Endothelial cell of umbilical vein (primary cell): ENCODE measurements at regions of chr10 and their contacts with region 1.

Region 1: DNA sequence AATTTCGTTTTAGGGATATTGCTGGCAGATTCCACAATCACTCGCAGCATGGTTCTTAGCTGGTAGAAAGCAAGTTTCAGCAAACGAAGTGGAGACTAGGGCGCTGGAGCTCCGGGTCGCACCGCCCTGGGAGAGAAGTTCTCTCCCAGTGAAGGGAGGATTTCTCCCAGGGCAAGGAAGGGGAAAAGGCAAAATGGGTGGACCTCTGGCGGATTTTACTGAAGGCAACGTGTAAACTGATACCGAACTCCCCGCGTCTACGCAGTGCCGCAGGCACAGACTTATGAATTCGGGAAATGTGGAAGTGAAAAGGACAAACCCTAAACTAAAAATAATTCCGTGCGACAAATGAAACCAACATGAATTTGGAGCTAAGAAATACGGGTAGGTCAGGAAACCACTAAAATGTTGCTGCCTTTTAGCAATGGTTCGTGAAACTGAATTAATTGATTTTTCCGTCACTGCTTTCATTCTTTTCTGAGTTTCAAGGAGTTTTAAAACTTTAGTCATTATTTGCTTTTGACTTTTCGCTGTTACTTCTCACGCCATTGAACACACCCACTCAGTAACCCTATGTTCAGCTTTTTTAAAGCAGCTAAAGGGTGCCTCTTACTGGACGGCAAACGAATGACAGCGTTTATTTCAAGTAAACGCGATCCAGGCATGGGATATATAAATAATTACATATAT is at the start of gene MYOF:
- DNase-seq: peak; percentile 89
- H3K4me3 ChIP-seq: peak within 1 kb of the TSS; percentile 57 to 99 (median 72)
- H3K27ac ChIP-seq: peak within 1 kb of the TSS; percentile 89
- H3K4me1 ChIP-seq: peaks cover 22% of the 10 kb centered on the region
- H3K27me3 ChIP-seq: no peaks in the 10 kb centered on the region
- CTCF ChIP-seq: peak; percentile 46 to 47
- POLR2A ChIP-seq: peak; percentile 76
- total RNA-seq, gene MYOF: 342 and 379 TPM in 2 replicates

Region 2: GRCh38 chr10:93376372-93377293 is 105.7 kb before region 1 on chr10:
- CTCF ChIA-PET with region 1: interaction called, 451 read pairs
- POLR2A ChIA-PET with region 1: interaction called, 12 read pairs
- dilution Hi-C with region 1: no loop called
- intact Hi-C with region 1: loop called (anchors 1 kb)
- DNase-seq: peak; percentile 90
- H3K4me3 ChIP-seq: no peak overlapping the region
- H3K27ac ChIP-seq: peak overlapping the region; percentile 57
- H3K4me1 ChIP-seq: peaks cover 46% of the 10 kb centered on the region
- H3K27me3 ChIP-seq: no peaks in the 10 kb centered on the region
- CTCF ChIP-seq: peak; percentile 77 to 78
- POLR2A ChIP-seq: no peak

Region 3: DNA sequence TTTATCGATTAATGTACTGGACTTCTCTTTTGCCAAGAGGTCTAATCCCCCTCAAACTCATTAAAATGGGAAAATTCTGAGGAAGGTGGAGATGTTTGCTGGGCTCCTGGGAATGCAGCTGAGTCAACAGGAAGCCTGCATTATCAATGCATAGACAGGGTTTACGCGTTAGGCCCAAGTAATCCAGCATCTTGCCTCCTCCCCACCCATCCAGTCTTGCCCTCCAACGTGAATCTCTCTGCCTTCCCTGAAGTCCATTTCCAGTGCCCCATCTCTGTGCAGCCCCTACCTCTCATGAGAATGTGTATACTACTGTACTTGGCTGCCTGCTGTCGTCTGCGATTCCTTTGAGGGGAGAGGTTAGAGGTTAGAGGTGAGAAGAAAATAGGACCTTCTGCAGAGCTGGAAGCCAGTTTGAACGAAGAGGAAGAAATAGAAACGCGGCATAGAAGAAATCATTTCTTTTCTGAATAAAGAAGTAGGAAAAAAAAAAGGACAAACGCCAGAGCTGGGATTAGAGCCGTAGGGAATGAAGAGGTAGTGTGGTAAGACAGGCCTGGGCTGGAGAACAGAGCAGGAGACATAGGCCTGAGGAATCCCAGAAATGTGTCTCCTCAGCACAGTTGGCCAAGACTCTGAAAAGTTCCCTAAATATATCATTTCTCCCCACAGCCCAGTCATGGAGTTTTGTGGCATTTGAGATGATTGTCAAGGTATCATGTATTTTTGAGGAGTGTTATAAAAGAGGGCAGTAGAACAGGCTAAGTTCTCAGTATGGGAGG is 75.7 kb before region 1 on chr10:
- CTCF ChIA-PET with region 1: interaction called, 48 read pairs
- POLR2A ChIA-PET with region 1: interaction called, 14 read pairs
- dilution Hi-C with region 1: no loop called
- intact Hi-C with region 1: loop called (anchors 1 kb)
- DNase-seq: peak; percentile 51
- H3K4me3 ChIP-seq: no peak overlapping the region
- H3K27ac ChIP-seq: peak overlapping the region; percentile 0
- H3K4me1 ChIP-seq: peaks cover 30% of the 10 kb centered on the region
- H3K27me3 ChIP-seq: no peaks in the 10 kb centered on the region
- CTCF ChIP-seq: no peak
- POLR2A ChIP-seq: no peak

Region 4: GRCh38 chr10:93437088-93437945 is 45.0 kb before region 1 on chr10:
- CTCF ChIA-PET with region 1: interaction called, 69 read pairs
- POLR2A ChIA-PET with region 1: interaction called, 3 read pairs
- dilution Hi-C with region 1: no loop called
- intact Hi-C with region 1: loop called (anchors 1 kb)
- DNase-seq: peak; percentile 99
- H3K4me3 ChIP-seq: no peak overlapping the region
- H3K27ac ChIP-seq: peak overlapping the region; percentile 100
- H3K4me1 ChIP-seq: peaks cover 52% of the 10 kb centered on the region
- H3K27me3 ChIP-seq: no peaks in the 10 kb centered on the region
- CTCF ChIP-seq: no peak
- POLR2A ChIP-seq: peak; percentile 50

Region 5: GRCh38 chr10:93463678-93464476 is 18.4 kb before region 1 on chr10:
- CTCF ChIA-PET with region 1: interaction called, 79 read pairs
- POLR2A ChIA-PET with region 1: interaction called, 10 read pairs
- dilution Hi-C with region 1: no loop called
- intact Hi-C with region 1: loop called (anchors 1 kb)
- DNase-seq: peak; percentile 41
- H3K4me3 ChIP-seq: no peak overlapping the region
- H3K27ac ChIP-seq: peak overlapping the region; percentile 89
- H3K4me1 ChIP-seq: peaks cover 86% of the 10 kb centered on the region
- H3K27me3 ChIP-seq: no peaks in the 10 kb centered on the region
- CTCF ChIP-seq: no peak
- POLR2A ChIP-seq: peak; percentile 32

Region 6: GRCh38 chr10:93503075-93503474 is 20.8 kb after region 1 on chr10:
- CTCF ChIA-PET with region 1: interaction called, 13 read pairs
- POLR2A ChIA-PET with region 1: no interaction called
- dilution Hi-C with region 1: no loop called
- intact Hi-C with region 1: no loop called
- DNase-seq: no peak
- H3K4me3 ChIP-seq: no peak overlapping the region
- H3K27ac ChIP-seq: no peak overlapping the region
- H3K4me1 ChIP-seq: peaks cover 9% of the 10 kb centered on the region
- H3K27me3 ChIP-seq: no peaks in the 10 kb centered on the region
- CTCF ChIP-seq: no peak
- POLR2A ChIP-seq: no peak